ENCODE measurements at regions of chr11 and their contacts with region 1.

Region 1: DNA sequence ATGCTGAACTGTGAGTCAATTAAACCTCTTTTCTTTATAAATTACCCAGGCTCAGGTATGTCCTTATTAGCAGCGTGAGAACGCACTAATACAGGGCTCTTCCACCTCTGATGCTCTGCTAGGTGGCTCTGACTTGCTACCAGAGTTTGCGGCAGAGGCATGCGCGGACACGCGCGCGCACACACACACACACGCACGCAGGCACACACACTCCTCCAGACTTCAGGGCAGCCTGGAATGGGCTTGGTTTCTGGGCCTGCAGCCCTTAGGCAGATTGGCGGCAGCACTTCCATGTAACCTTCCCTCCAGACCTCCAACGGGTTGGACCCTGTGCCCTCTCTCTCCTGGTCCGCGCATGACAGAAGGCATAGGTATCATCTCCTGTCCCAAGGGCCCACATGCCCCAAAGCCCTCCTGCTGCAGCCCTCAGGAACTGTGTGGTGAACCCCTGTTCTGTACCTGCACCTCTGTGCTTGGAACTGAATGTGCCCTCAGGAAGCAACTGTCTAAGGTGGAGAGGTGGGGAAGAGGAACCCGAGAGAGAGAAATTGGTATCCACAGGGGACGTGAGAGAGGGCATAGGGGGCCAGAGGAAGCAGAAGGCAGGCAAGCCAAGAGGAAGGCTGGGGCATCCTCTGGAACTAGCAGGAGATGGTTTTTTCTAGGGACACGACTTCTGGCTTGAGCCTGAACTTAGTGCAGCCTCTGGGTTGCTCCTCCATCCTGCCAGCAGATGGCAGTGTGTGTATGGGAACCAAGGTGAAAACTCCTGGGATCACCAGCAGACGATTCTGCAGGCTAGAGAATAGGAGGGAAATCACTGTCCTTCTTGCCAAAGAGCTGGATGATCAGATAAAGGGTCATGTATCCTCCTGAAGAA is 23.4 kb upstream of the RIC3 start:
- DNase-seq: peak; percentile 69 to 78
- ATAC-seq: peak; percentile 90 to 98
- H3K4me3 ChIP-seq: no peak overlapping the region
- H3K27ac ChIP-seq: no peak overlapping the region
- H3K4me1 ChIP-seq: no peaks in the 10 kb centered on the region
- CTCF ChIP-seq: peak; percentile 79
- EP300 ChIP-seq: no peak
- POLR2A ChIP-seq: no peak
- RAD21 ChIP-seq: peak; percentile 74 to 82

Region 2: DNA sequence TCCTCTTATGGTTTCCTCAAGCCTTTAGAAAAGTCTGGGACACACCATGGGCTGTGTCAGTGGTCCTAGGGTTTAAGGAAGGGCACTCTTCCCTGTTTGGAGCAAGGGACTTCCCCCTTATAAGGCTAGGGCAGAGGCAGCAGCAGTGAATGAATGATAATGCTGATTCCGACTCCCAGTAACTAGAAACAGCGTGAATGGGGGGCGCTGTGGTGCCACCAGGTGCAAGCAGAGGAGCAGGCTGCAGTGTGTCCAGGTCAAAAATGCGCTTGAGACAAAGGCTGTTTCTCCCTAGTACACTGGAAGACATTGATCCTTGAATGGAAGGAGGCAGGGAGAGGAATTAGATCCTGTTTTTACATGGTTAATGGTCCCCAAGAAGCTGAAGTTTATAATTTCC is 11.8 kb before region 1 on chr11:
- CTCF ChIA-PET with region 1: interaction called, 28 read pairs
- POLR2A ChIA-PET with region 1: no interaction called
- DNase-seq: no peak
- ATAC-seq: no peak
- H3K4me3 ChIP-seq: no peak overlapping the region
- H3K27ac ChIP-seq: no peak overlapping the region
- H3K4me1 ChIP-seq: no peaks in the 10 kb centered on the region
- CTCF ChIP-seq: no peak
- EP300 ChIP-seq: no peak
- POLR2A ChIP-seq: no peak
- RAD21 ChIP-seq: no peak

Region 3: GRCh38 chr11:8209208-8209807 is 17.1 kb after region 1 on chr11:
- CTCF ChIA-PET with region 1: interaction called, 70 read pairs
- POLR2A ChIA-PET with region 1: no interaction called
- DNase-seq: no peak
- ATAC-seq: peak in 1 of 2 experiments; percentile 56; a peak in 3 of 6 replicates
- H3K4me3 ChIP-seq: no peak overlapping the region
- H3K27ac ChIP-seq: no peak overlapping the region
- H3K4me1 ChIP-seq: no peaks in the 10 kb centered on the region
- CTCF ChIP-seq: peak; percentile 25; the same call in 2 of the 3 replicates
- EP300 ChIP-seq: no peak
- POLR2A ChIP-seq: no peak
- RAD21 ChIP-seq: no peak

Region 4: DNA sequence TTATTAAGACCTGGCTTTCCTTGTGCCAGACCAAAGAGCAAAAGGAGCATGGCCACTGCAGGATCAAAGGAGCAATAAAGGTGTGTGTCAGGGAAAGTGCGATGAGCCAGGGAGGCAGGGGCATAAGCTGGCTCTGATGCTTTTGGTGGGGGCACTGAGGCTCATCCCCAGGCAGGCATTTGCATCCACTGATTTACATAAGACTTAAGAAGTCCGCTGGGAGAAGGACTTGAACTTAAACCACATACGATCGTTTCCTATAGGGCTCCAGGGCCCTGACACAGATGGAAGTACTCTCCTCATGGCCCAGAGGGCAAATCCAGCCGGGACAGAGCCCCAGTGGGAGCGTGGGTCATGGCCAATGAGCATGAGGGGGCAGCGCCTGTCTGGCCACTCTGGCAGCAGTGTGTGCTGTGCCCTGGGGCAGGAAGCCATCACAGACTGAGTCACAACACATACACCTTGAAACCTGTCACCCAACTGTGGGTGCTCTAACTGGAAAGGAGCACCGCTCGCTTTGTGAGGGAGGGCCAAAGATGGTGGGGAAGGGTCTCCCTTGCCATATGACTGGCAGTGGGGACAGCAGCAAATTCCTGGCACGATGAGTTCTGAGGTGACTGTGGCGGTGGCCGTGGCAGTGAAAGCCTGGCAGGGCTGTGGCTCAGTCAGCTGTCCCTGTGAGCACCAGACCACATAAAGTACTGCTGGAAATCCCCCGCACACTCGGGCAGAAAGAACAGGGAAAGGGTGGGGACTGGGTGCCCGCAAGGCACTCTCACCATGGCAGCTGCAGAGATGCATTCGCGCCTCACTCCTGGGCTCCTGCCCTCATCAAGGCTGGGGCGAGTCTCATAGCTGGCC is 150.8 kb after region 1 on chr11:
- CTCF ChIA-PET with region 1: no interaction called
- POLR2A ChIA-PET with region 1: no interaction called
- DNase-seq: no peak
- ATAC-seq: peak in 1 of 2 experiments; percentile 41; a peak in 3 of 6 replicates
- H3K4me3 ChIP-seq: no peak overlapping the region
- H3K27ac ChIP-seq: no peak overlapping the region
- H3K4me1 ChIP-seq: no peaks in the 10 kb centered on the region
- CTCF ChIP-seq: no peak
- EP300 ChIP-seq: no peak
- POLR2A ChIP-seq: no peak
- RAD21 ChIP-seq: no peak